Naive thymus-derived CD8-positive, alpha-beta T cell (primary cell): ENCODE measurements at regions of chr2 and their contacts with region 1.

Region 1: DNA sequence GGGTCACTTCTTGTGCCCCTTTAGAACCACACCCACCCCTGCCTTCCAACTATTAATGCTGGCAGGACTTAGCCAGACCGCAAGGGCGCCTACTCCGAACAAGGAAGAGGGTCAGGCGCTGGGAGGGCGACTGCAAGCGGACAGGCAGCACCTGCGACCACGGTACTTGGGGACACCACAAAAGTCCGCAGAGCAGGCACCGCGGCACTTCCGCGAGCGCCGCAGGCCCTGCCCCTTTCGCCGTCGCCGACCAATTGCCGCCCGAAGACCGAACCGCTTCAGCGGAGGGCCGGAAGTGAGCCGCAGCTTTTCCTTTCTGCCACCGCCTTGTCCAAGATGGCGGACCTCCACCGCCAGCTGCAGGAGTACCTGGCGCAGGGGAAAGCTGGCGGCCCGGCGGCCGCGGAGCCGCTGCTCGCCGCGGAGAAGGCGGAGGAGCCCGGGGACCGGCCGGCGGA is at the start of gene SFT2D3:
- DNase-seq: peak; percentile 79 to 93 (median 88)
- ATAC-seq: peak; percentile 72 to 78
- H3K4me3 Mint-ChIP-seq: peak within 1 kb of the TSS; percentile 88 to 96 (median 94)
- H3K27ac Mint-ChIP-seq: peak within 1 kb of the TSS; percentile 97 to 99 (median 98)
- H3K4me1 Mint-ChIP-seq: peaks cover 20 to 51% (median 40%) of the 10 kb centered on the region in 4 donors
- H3K27me3 Mint-ChIP-seq: peaks cover 0 to 2% (median 0%) of the 10 kb centered on the region in 5 donors
- polyA plus RNA-seq, gene SFT2D3: 1.7 to 4.4 (median 2.4) TPM

Region 2: GRCh38 chr2:127526149-127527000 is 174.8 kb before region 1 on chr2 and contains the start of gene IWS1:
- POLR2A ChIA-PET with region 1: interaction called, 11 read pairs
- DNase-seq: peak; percentile 84 to 96 (median 92)
- ATAC-seq: peak; percentile 91
- H3K4me3 Mint-ChIP-seq: peak within 1 kb of the TSS; percentile 88 to 99 (median 96)
- H3K27ac Mint-ChIP-seq: peak within 1 kb of the TSS; percentile 97 to 100 (median 99)
- H3K4me1 Mint-ChIP-seq: peaks cover 17 to 53% (median 40%) of the 10 kb centered on the region in 4 donors
- H3K27me3 Mint-ChIP-seq: no peaks in the 10 kb centered on the region
- polyA plus RNA-seq, gene IWS1: 12.4 to 30.1 (median 19.3) TPM

Region 3: GRCh38 chr2:127591221-127591923 is 109.8 kb before region 1 on chr2:
- POLR2A ChIA-PET with region 1: interaction called, 12 read pairs
- DNase-seq: peak; percentile 51 to 87 (median 70)
- ATAC-seq: peak; percentile 99 to 100
- H3K4me3 Mint-ChIP-seq: no peak overlapping the region
- H3K27ac Mint-ChIP-seq: peak overlapping the region in 7 of 10 donors; percentile 11 to 87 (median 35)
- H3K4me1 Mint-ChIP-seq: peaks cover 0 to 13% (median under 1%) of the 10 kb centered on the region in 4 donors
- H3K27me3 Mint-ChIP-seq: no peaks in the 10 kb centered on the region

Region 4: DNA sequence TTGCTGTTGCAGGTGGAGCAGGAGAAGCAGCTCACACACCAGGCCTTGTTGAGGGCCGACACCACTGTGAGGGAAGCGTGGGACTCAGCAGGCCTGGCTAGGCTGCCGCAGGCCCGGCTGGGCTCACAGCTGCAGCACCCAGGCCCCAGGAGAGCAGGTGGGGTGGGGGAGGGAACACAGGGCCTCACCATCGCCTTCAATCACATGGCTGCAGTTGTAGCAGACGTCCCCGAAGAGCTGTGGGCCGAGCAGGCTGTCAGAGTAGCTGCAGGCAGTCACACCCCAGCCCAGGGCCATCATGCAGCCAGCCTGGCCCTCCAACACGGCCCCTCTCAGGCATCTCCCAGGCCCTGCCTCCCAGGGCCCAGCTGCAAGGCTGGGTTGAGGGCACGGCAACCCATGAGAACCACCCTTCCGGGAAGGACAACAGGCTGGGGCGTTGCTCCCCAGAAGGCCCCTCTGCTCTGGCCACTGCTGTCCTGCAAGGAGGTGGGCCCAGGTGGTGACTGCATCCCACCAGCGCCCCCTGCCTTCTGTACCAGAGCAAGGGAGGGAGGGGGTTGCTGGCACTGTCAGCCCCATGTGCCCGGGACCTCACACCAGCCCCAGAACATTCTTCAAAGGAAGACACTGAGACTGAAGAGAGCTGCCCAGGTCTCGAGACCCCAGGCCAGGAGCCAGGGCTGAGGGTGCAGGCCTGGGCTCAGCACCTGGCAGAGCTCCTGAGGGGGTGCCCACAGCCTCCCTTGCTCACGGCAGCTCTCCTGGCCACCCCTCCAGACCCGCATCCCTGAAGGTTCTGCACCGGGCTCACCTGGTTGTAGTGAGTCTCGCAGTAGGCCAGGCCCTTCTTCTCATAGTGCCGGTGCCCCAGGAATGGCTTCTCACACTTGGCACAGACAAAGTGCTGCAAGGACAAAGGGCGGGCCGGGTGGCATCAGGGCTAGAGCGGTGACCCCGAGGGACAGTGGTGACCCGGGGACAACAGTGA is 60.8 kb before region 1 on chr2:
- POLR2A ChIA-PET with region 1: interaction called, 10 read pairs
- DNase-seq: peak in 2 of 10 donors; percentile 27 to 31
- ATAC-seq: peak; percentile 13 to 17
- H3K4me3 Mint-ChIP-seq: peak overlapping the region; percentile 45 to 73 (median 56)
- H3K27ac Mint-ChIP-seq: peak overlapping the region; percentile 68 to 93 (median 84)
- H3K4me1 Mint-ChIP-seq: peaks cover 25 to 77% (median 64%) of the 10 kb centered on the region in 4 donors
- H3K27me3 Mint-ChIP-seq: no peaks in the 10 kb centered on the region

Region 5: DNA sequence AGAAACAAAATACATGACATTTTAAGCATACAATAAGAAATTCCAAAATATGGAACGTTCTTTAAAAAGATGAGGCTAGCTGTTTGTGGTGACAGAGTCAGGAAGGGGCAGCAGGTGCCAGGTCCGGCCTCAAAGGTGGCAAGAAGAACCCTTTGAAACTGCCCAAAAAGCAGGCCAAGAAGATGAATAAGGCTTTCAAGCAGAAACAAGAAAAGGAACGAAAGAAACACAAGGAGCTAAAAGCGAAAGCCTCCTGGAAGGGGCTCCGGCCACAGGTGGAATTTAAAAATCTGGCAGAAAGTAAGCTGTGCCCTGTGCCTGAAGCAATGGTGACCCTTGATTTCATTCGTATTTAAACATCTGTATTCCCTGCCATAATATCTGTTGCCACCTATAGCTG is 104.3 kb after region 1 on chr2:
- POLR2A ChIA-PET with region 1: interaction called, 13 read pairs
- DNase-seq: no peak
- ATAC-seq: no peak
- H3K4me3 Mint-ChIP-seq: peak overlapping the region in 9 of 10 donors; percentile 2 to 70 (median 41)
- H3K27ac Mint-ChIP-seq: peak overlapping the region in 4 of 10 donors; percentile 14 to 60 (median 47)
- H3K4me1 Mint-ChIP-seq: peaks cover 33 to 85% (median 69%) of the 10 kb centered on the region in 4 donors
- H3K27me3 Mint-ChIP-seq: no peaks in the 10 kb centered on the region

Region 6: DNA sequence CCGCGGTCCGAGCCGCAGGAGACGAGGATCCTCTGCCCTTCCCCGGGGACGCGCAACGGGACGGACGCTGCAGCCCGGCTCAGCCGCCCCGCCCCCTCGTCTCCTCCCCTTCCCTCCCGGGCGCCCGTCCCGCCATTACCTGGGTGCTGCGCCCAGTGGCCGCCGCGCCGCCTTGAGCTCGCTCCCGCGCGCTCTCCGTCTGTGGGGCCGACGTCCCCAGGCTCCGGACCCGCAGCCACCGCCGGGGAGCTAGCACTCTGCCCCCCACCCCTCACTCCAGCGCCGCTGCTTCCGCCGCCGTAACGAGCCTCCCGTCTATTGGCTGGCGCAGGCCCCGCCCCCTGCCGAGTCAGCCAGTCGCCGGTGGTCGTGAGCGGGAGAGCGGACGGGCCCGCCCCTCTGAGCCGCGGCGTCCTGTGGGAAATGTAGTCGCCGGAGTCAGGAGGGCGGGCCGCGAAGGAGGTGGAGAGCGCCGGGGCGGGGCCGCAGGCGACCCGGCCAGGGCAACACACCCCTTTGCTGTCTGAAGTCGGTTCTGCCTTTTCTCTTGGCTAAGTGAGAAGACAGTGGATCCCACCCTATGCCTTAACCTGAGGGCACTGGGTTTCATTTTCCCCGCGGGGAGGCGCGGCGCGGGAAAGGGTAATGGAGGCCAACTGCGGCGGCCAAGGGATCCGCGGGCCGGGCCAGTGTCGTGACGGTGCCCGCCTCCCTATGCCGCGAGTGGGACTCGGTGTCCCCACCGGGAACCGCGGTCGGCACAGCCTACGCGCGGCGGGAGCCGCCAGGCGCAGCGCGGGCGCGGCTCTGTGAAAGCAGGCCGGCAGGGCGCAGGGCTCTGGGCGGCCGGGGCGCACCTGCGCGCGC is 326.8 kb after region 1 on chr2 and contains the start of gene SAP130:
- POLR2A ChIA-PET with region 1: interaction called, 10 read pairs
- DNase-seq: peak; percentile 93 to 99 (median 98)
- ATAC-seq: peak; percentile 73 to 74
- H3K4me3 Mint-ChIP-seq: peak within 1 kb of the TSS; percentile 87 to 98 (median 96)
- H3K27ac Mint-ChIP-seq: peak within 1 kb of the TSS; percentile 72 to 97 (median 94)
- H3K4me1 Mint-ChIP-seq: peaks cover 10 to 35% (median 21%) of the 10 kb centered on the region in 4 donors
- H3K27me3 Mint-ChIP-seq: peaks cover 0 to 3% (median 0%) of the 10 kb centered on the region in 5 donors
- polyA plus RNA-seq, gene SAP130: 5.4 to 12.1 (median 5.9) TPM